ENCODE measurements at regions of chr5 and their contacts with region 1.

Region 1: DNA sequence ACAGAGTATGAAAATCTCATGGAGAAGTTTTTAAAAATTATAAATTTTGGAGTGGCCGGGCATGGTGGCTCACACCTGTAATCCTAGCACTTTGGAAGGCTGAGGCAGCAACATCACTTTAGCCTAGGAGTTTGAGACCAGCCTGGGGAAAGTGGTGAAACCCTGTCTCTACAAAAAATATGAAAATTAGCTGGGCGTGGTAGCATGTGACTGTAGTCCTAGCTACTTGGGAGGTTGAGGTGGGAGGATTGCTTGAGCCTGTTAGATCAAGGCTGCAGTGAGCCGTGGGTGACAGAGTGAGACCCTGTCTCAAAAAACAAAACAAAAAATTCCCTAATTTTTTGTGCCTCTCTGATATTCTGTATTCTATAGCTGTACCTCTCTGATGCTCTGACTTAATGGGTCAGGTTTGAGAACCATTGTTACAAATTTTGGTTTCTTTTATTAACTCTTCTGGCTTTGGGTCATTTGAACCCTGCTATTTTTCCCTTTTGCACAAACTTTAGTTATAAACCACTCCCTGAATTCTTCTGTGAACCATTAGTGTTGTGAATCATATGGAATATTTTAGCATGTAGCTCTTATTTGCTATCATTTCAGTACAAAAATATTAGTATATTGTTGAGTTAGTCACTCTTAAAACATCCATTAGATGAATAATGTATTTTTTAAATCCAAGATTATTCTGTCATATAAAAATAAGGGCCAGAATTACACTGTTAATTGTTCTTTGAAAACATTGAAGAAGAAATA is 51.0 kb downstream of the FER start:
- DNase-seq: no peak
- ATAC-seq: no peak
- H3K4me3 ChIP-seq: no peak overlapping the region
- H3K4me3 Mint-ChIP-seq: no peak overlapping the region
- H3K27ac ChIP-seq: no peak overlapping the region
- H3K27ac Mint-ChIP-seq: no peak overlapping the region
- H3K4me1 ChIP-seq: no peaks in the 10 kb centered on the region
- H3K4me1 Mint-ChIP-seq: no peaks in the 10 kb centered on the region
- H3K27me3 ChIP-seq: no peaks in the 10 kb centered on the region
- H3K27me3 Mint-ChIP-seq: no peaks in the 10 kb centered on the region
- CTCF ChIP-seq: no peak

Region 2: DNA sequence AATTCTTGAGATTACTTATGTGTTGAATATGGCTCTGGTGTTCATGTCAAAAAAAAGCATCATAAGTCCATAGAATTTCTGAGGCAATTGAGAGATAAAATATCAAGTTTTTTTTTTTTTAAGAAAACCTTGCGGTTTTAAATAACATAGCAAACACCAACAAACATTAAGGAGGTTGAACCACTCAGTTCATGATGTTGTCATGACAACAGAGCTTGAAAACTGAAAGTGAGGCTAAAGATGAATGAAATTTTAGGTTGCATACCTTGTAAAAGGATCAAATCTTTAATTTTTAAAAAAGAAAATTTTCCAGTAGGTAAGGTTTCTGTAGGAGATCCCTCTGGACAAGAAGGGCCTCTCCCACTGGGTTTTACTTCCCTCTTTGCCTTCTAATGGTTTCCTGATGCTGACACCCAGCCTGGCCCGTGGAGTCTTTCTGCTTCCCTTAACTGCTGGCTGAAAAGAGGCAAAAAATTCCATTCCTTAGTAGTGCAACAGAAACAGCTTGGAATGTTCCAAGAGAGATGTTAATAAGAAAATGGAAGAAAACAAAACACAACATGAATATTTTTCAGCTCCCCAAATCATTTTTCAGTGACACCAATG is 111.0 kb before region 1 on chr5:
- CTCF ChIA-PET with region 1: no interaction called
- POLR2A ChIA-PET with region 1: no interaction called
- intact Hi-C with region 1: no loop called
- DNase-seq: peak in 2 of 14 experiments; percentile 3 to 5
- ATAC-seq: no peak
- H3K4me3 ChIP-seq: no peak overlapping the region
- H3K4me3 Mint-ChIP-seq: no peak overlapping the region
- H3K27ac ChIP-seq: no peak overlapping the region
- H3K27ac Mint-ChIP-seq: no peak overlapping the region
- H3K4me1 ChIP-seq: no peaks in the 10 kb centered on the region
- H3K4me1 Mint-ChIP-seq: no peaks in the 10 kb centered on the region
- H3K27me3 ChIP-seq: no peaks in the 10 kb centered on the region
- H3K27me3 Mint-ChIP-seq: peaks cover 7% of the 10 kb centered on the region
- CTCF ChIP-seq: no peak

Region 3: DNA sequence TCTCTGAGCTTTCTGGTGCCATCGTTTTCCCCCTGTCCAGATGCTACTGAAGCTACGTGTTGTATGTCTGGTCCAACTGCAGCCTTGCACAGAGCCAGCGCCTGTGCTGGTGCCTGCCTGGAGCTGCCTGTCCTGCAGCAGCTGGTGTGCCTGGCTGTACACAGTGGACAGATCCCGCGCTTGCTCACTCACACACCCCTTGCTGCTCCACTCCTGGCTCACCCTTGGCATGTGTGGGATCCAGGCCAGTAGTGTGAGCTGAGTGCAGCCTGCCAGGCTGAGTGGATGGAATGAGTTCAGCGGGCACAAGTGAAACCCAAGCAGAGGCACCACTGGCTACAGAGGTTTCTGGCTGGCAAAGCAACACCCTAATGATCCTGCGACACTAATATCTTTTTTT is 10.5 kb before region 1 on chr5:
- CTCF ChIA-PET with region 1: interaction called, 10 read pairs
- POLR2A ChIA-PET with region 1: no interaction called
- intact Hi-C with region 1: no loop called
- DNase-seq: no peak
- ATAC-seq: no peak
- H3K4me3 ChIP-seq: no peak overlapping the region
- H3K4me3 Mint-ChIP-seq: no peak overlapping the region
- H3K27ac ChIP-seq: no peak overlapping the region
- H3K27ac Mint-ChIP-seq: no peak overlapping the region
- H3K4me1 ChIP-seq: no peaks in the 10 kb centered on the region
- H3K4me1 Mint-ChIP-seq: peaks cover 4% of the 10 kb centered on the region
- H3K27me3 ChIP-seq: no peaks in the 10 kb centered on the region
- H3K27me3 Mint-ChIP-seq: no peaks in the 10 kb centered on the region
- CTCF ChIP-seq: no peak

Measured in CD4-positive, alpha-beta T cell (primary cell).